Ovary (tissue), 10 donors: ENCODE measurements at regions of chr17 and their contacts with region 1.

Region 1: GRCh38 chr17:49227436-49228261 is 2.9 kb downstream of the PHOSPHO1 start:
- DNase-seq: peak in 4 of 5 donors; percentile 51 to 69 (median 66)
- H3K4me3 ChIP-seq: no peak overlapping the region
- H3K27ac ChIP-seq: no peak overlapping the region
- H3K4me1 ChIP-seq: peaks cover 3% of the 10 kb centered on the region
- H3K27me3 ChIP-seq: peaks cover 2% of the 10 kb centered on the region
- CTCF ChIP-seq: peak; percentile 42 to 52 (median 48)
- EP300 ChIP-seq: no peak
- POLR2A ChIP-seq: no peak

Region 2: GRCh38 chr17:49093082-49093741 is 134.4 kb before region 1 on chr17:
- intact Hi-C with region 1: no loop called
- DNase-seq: no peak
- H3K4me3 ChIP-seq: no peak overlapping the region
- H3K27ac ChIP-seq: no peak overlapping the region
- H3K4me1 ChIP-seq: no peaks in the 10 kb centered on the region
- H3K27me3 ChIP-seq: no peaks in the 10 kb centered on the region
- CTCF ChIP-seq: no peak
- EP300 ChIP-seq: no peak
- POLR2A ChIP-seq: no peak

Region 3: GRCh38 chr17:49170216-49170615 is 57.4 kb before region 1 on chr17:
- intact Hi-C with region 1: loop called in 1 of 4 experiments (anchors 10 kb)
- DNase-seq: no peak
- H3K4me3 ChIP-seq: no peak overlapping the region
- H3K27ac ChIP-seq: no peak overlapping the region
- H3K4me1 ChIP-seq: no peaks in the 10 kb centered on the region
- H3K27me3 ChIP-seq: no peaks in the 10 kb centered on the region
- CTCF ChIP-seq: no peak
- EP300 ChIP-seq: no peak
- POLR2A ChIP-seq: no peak

Region 4: DNA sequence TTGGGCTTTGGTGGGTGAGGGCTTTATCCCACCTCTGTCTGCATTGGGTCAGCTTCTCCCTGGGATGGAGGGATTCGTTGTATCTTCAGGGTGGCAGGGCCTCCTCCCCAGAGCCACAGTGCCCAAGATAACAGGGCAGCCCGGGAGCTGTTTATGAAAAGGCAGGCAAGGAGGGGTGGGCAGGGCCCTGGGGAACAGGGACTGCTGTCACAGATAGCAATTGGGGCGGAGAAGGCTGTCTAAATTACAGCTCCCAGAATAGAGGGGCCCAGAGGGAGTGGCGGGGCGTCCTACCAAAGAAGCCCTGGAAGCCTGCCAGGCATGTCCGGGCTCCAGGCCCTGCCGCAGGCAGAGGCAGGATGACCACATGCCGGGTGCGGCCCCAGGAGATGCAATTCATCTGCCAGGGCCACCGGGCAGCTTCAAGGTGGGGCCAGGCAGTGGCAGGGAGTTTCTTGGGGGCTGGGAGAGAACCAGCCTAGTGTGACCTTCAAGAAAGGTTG is 21.7 kb after region 1 on chr17:
- intact Hi-C with region 1: no loop called
- DNase-seq: no peak
- H3K4me3 ChIP-seq: no peak overlapping the region
- H3K27ac ChIP-seq: no peak overlapping the region
- H3K4me1 ChIP-seq: no peaks in the 10 kb centered on the region
- H3K27me3 ChIP-seq: no peaks in the 10 kb centered on the region
- CTCF ChIP-seq: no peak
- EP300 ChIP-seq: no peak
- POLR2A ChIP-seq: no peak

Region 5: GRCh38 chr17:49260011-49260921 is 32.6 kb after region 1 on chr17:
- intact Hi-C with region 1: no loop called
- DNase-seq: peak; percentile 10 to 50 (median 20)
- H3K4me3 ChIP-seq: peak overlapping the region; percentile 23
- H3K27ac ChIP-seq: no peak overlapping the region
- H3K4me1 ChIP-seq: peaks cover 1% of the 10 kb centered on the region
- H3K27me3 ChIP-seq: no peaks in the 10 kb centered on the region
- CTCF ChIP-seq: no peak
- EP300 ChIP-seq: no peak
- POLR2A ChIP-seq: no peak

Region 6: DNA sequence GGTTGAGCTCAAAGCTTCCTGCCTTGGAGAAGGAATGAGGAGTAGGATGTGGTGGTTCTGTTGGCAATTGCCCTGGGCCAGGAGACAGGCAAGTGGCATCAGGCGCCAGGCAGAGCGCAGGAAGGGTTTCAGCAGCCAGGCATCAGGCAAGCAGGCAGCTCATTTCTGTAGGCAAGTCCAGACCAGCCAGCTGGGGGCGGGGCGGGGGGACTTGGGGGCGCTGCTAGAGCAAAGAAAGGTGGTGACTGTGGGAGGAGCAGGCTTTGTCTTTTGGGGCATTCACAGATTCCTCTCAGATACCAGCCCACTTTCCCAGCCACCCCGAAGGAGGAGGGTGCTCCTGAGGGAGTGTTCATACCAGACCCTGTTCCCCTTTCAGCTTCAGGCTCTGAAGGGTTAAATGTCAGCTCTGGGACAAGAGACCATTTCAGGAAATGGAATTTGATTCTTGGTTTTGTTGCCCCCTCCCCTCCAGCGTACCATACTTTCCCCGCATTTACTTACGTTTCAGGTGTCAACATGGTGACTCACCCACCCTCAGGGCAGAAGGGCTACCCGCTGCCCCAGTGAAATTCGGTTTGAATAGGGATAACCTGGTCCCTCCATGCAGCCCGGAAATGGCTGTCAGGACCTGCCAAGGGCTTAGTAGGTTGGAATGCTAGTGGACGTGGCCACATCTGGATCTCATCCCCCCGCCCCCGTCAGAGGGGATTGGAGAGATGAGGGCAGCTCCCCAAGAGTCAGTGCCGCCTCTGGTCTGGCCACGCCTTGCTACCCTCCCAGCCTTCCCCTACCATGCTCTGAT is 280.6 kb after region 1 on chr17:
- intact Hi-C with region 1: no loop called
- DNase-seq: no peak
- H3K4me3 ChIP-seq: no peak overlapping the region
- H3K27ac ChIP-seq: no peak overlapping the region
- H3K4me1 ChIP-seq: peaks cover 2% of the 10 kb centered on the region
- H3K27me3 ChIP-seq: no peaks in the 10 kb centered on the region
- CTCF ChIP-seq: no peak
- EP300 ChIP-seq: no peak
- POLR2A ChIP-seq: no peak